ENCODE measurements at regions of chr15 and their contacts with region 1.

Region 1: GRCh38 chr15:33086507-33087121 is 107.9 kb downstream of the FMN1 start:
- DNase-seq: peak; percentile 62
- H3K4me3 ChIP-seq: no peak overlapping the region
- H3K27ac ChIP-seq: no peak overlapping the region
- H3K4me1 ChIP-seq: no peaks in the 10 kb centered on the region
- H3K27me3 ChIP-seq: no peaks in the 10 kb centered on the region
- CTCF ChIP-seq: peak; percentile 35 to 44
- POLR2A ChIP-seq: no peak

Region 2: GRCh38 chr15:33098094-33099040 is 11.8 kb after region 1 on chr15:
- CTCF ChIA-PET with region 1: interaction called, 18 read pairs
- POLR2A ChIA-PET with region 1: no interaction called
- dilution Hi-C with region 1: no loop called
- intact Hi-C with region 1: no loop called
- DNase-seq: peak; percentile 54
- H3K4me3 ChIP-seq: no peak overlapping the region
- H3K27ac ChIP-seq: peak overlapping the region; percentile 25
- H3K4me1 ChIP-seq: peaks cover 11% of the 10 kb centered on the region
- H3K27me3 ChIP-seq: no peaks in the 10 kb centered on the region
- CTCF ChIP-seq: no peak
- POLR2A ChIP-seq: no peak

Region 3: DNA sequence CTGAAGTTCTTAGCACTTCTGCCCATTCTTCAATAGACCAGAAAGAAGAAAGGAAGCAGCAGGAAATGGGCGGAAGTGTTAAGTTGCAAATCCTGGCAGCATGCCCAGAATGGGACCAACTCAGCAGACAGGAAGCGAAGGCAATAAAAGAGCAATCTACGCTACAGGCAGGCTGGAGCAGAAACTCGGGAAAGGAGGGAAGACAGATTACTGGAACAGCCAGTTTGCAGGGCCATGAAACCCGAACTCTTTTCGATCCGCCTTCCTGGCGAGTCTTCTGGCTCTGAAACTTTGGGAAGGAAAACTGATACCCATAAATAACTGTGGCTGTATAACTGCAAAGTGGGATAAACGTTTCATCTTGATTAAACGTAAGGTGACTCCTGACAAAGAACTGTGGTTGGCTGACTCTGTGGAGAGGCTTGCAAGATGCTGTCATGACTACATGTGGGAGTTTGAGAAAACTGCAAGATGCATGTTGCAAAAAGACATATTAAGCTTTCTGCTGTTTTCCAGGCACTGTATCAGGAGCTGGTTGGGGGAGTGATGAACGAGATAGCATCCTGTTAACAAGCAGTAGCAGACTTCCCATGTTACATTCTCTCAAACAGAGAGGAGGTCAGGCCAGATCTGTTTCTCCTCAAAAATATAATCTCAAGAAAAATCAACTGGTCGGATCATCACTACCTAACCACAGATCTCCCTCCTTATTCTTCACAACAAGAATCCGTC is 40.1 kb after region 1 on chr15:
- CTCF ChIA-PET with region 1: interaction called, 497 read pairs
- POLR2A ChIA-PET with region 1: no interaction called
- dilution Hi-C with region 1: no loop called
- intact Hi-C with region 1: no loop called
- DNase-seq: peak; percentile 97
- H3K4me3 ChIP-seq: peak overlapping the region in 1 of 3 experiments; percentile 29
- H3K27ac ChIP-seq: peak overlapping the region; percentile 13
- H3K4me1 ChIP-seq: peaks cover 19% of the 10 kb centered on the region
- H3K27me3 ChIP-seq: no peaks in the 10 kb centered on the region
- CTCF ChIP-seq: no peak
- POLR2A ChIP-seq: no peak

Region 4: DNA sequence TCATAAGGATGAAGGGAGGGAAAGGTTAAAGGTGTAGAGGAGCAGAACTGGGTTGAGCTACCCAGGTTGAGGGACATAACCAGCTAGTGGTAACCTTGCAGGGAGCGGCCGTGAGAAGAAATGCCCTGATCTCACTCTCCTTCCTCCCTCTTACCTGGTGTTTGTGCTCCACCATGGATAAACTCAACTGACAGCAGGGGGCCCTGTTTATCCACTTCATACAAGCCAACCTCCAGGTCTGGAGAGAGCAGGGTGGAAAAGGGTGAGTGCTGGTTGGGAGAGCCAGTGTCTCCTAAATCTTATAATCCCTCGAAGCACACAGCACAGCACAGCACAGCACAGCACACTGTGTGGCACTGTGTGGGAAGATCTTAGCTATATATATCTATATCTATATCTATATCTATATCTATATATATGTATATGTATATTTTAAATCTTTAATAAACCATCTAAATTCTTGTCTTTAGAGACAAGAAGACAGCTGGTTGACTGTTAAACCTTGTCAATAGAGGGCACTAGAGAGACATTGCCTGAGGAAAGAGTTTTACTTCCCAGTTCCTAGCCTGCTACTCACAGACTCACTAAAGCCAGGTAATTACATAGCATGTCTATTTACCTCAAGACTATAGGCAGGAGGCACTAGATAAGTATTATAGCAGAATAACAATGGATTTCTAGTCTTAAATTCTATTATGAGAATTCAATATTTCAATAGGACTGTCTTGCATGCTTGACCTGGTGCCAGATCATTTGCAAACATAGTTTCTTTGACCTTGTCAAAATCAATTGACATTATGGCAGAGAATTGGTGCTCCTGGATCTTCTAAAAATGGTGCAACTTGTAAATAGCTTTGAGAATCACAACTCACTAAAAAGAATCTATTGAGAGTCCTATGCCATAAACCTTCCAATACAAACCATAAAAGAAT is 129.6 kb after region 1 on chr15:
- CTCF ChIA-PET with region 1: interaction called, 3 read pairs
- POLR2A ChIA-PET with region 1: no interaction called
- dilution Hi-C with region 1: no loop called
- intact Hi-C with region 1: loop called (anchors 10 kb)
- DNase-seq: peak; percentile 31
- H3K4me3 ChIP-seq: no peak overlapping the region
- H3K27ac ChIP-seq: no peak overlapping the region
- H3K4me1 ChIP-seq: no peaks in the 10 kb centered on the region
- H3K27me3 ChIP-seq: no peaks in the 10 kb centered on the region
- CTCF ChIP-seq: peak; percentile 20 to 51
- POLR2A ChIP-seq: no peak

Region 5: DNA sequence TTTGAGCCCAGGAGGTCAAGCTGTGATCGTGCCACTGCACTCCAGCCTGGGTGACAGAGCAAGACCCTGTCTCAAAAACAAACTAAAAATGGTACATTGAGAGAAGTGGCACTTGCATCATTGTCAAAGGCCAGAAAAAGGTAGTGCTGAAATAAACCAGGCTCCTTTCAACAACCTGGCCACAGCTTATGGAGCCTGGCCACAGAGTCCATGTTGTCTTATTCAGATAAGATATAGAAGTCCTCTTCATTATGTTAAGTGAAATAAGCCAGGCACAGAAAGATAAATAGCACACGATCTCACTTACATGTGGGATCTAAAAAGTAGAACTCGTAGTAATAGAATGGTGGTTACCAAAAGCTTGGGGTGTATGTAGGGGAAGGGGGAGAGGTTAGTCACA is 1173.0 kb after region 1 on chr15:
- CTCF ChIA-PET with region 1: no interaction called
- POLR2A ChIA-PET with region 1: no interaction called
- dilution Hi-C with region 1: no loop called
- intact Hi-C with region 1: no loop called
- DNase-seq: no peak
- H3K4me3 ChIP-seq: no peak overlapping the region
- H3K27ac ChIP-seq: no peak overlapping the region
- H3K4me1 ChIP-seq: no peaks in the 10 kb centered on the region
- H3K27me3 ChIP-seq: no peaks in the 10 kb centered on the region
- CTCF ChIP-seq: no peak
- POLR2A ChIP-seq: no peak

Measured in endothelial cell of umbilical vein (primary cell).